ENCODE measurements at regions of chr11 and their contacts with region 1.

Region 1: GRCh38 chr11:75388386-75389275 is 10.7 kb upstream of the RPS3 start:
- DNase-seq: peak; percentile 83
- ATAC-seq: peak; percentile 92
- H3K4me3 Mint-ChIP-seq: no peak overlapping the region
- H3K27ac Mint-ChIP-seq: no peak overlapping the region
- H3K4me1 Mint-ChIP-seq: peaks cover 10% of the 10 kb centered on the region
- H3K27me3 Mint-ChIP-seq: peaks cover 4% of the 10 kb centered on the region

Region 2: DNA sequence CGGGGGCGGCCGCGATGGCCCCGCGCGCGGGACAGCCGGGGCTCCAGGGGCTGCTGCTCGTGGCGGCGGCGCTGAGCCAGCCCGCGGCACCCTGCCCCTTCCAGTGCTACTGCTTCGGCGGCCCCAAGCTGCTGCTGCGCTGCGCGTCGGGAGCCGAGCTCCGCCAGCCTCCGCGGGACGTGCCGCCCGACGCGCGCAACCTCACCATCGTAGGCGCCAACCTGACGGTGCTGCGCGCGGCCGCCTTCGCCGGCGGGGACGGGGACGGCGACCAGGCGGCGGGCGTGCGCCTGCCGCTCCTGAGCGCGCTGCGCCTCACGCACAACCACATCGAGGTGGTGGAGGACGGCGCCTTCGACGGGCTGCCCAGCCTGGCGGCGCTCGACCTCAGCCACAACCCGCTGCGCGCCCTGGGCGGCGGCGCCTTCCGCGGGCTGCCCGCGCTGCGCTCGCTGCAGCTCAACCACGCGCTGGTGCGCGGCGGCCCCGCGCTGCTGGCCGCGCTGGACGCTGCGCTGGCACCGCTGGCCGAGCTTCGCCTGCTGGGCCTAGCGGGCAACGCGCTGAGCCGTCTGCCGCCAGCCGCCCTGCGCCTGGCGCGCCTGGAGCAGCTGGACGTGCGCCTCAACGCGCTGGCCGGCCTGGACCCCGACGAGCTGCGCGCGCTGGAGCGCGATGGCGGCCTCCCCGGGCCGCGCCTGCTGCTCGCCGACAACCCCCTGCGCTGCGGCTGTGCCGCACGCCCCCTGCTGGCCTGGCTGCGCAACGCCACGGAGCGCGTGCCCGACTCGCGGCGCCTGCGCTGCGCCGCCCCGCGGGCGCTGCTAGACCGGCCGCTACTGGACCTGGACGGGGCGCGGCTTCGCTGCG is 147.4 kb before region 1 on chr11:
- CTCF ChIA-PET with region 1: interaction called, 10 read pairs
- POLR2A ChIA-PET with region 1: no interaction called
- intact Hi-C with region 1: no loop called
- DNase-seq: peak; percentile 92
- ATAC-seq: peak; percentile 88
- H3K4me3 Mint-ChIP-seq: peak overlapping the region; percentile 59
- H3K27ac Mint-ChIP-seq: no peak overlapping the region
- H3K4me1 Mint-ChIP-seq: peaks cover 8% of the 10 kb centered on the region
- H3K27me3 Mint-ChIP-seq: peaks cover 23% of the 10 kb centered on the region

Region 3: GRCh38 chr11:75280227-75280701 is 108.4 kb before region 1 on chr11:
- CTCF ChIA-PET with region 1: interaction called, 279 read pairs
- POLR2A ChIA-PET with region 1: no interaction called
- intact Hi-C with region 1: loop called (anchors 1 kb)
- DNase-seq: peak; percentile 86
- ATAC-seq: peak; percentile 77
- H3K4me3 Mint-ChIP-seq: no peak overlapping the region
- H3K27ac Mint-ChIP-seq: peak overlapping the region; percentile 47
- H3K4me1 Mint-ChIP-seq: peaks cover 35% of the 10 kb centered on the region
- H3K27me3 Mint-ChIP-seq: no peaks in the 10 kb centered on the region

Region 4: GRCh38 chr11:75340050-75340409 is 48.6 kb before region 1 on chr11:
- CTCF ChIA-PET with region 1: interaction called, 5 read pairs
- POLR2A ChIA-PET with region 1: no interaction called
- intact Hi-C with region 1: loop called in 1 of 2 experiments (anchors 2 kb)
- DNase-seq: no peak
- ATAC-seq: peak; percentile 6
- H3K4me3 Mint-ChIP-seq: no peak overlapping the region
- H3K27ac Mint-ChIP-seq: peak overlapping the region; percentile 83
- H3K4me1 Mint-ChIP-seq: peaks cover 95% of the 10 kb centered on the region
- H3K27me3 Mint-ChIP-seq: no peaks in the 10 kb centered on the region

Region 5: GRCh38 chr11:75450826-75451821 is 62.5 kb after region 1 on chr11:
- CTCF ChIA-PET with region 1: interaction called, 4 read pairs
- POLR2A ChIA-PET with region 1: no interaction called
- intact Hi-C with region 1: loop called in 1 of 2 experiments (anchors 1 kb)
- DNase-seq: peak; percentile 71
- ATAC-seq: peak; percentile 65
- H3K4me3 Mint-ChIP-seq: no peak overlapping the region
- H3K27ac Mint-ChIP-seq: no peak overlapping the region
- H3K4me1 Mint-ChIP-seq: no peaks in the 10 kb centered on the region
- H3K27me3 Mint-ChIP-seq: no peaks in the 10 kb centered on the region

Measured in activated CD4-positive, alpha-beta T cell treated with anti-CD3 and anti-CD28 coated beads for 36 hours (primary cell).